ENCODE measurements at regions of chr2 and their contacts with region 1.

Region 1: DNA sequence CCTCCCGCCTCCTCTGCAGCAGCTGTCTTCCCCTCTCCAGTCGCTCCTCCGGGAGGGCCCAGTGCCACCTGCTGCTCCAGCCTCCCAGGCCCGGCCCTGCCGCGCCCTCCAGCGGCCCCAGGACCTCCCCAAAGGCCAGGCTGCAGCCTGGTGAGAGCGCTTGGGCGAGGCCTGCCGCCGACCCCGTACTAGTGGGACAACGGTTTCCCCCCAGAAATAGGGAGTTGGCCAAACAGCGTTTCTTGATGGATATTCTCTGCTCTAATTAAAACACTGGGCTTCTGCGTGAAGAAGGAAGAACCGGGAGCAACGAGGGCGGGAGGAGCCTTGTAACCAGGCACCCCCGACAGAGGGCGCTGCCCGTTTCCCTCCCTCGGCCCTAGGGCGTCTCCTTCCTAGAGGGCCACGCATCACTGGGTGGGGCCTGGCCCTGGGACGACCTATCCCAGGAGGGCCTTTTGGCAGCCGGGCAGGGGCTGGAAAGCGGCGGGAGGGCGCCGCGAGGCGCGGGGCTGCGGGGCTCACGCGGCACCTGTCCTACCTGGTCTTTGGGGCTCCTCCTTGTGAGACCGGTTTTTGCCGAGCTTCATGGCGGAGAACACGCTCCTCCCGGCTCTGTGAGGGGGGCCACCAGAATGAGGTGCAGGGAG is 25.4 kb upstream of the OTOF start:
- DNase-seq: peak; percentile 50 to 96 (median 72)

Region 2: DNA sequence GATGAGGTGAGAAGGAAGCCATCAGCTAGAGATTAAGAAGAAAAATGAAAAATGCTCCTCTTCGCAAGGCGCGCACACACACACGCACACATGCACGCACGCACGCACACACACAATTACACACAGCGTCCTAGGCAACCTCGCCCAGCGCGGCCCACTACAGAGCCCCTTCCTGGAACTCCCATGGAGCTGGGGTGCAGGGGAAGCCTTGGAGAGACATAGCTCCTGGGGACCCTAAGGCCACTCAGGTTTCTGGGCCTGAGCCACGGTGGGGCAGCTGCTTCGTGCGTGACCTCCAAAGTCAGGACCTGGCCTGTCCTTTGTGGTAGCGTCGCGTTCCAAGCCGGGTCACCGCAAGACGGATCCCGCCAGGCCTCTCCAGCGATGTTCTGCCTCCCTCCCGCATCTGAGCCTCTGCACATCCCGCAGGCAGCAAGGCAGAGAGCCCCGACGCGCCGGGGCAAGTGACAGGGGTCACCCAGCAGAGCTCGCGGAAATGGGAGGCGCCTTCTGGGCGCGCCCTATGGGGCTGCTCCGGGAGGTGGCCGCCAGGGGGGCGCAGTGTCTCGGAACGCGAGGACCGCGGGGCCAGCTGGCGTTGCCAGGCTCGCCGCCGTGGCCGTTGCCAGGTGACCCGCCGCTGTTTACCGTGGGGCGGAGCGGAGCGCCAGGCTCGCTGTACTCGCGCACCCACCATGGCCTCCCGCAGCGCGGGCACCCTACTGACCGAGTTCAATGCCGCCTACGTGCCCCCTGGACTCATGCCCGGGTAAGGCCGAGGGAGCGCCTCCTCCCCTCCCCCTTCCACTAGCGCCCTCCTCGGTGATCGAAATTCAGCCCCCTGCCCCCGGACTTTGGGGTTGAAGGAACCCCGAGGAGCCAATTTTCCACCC is 58.8 kb after region 1 on chr2:
- intact Hi-C with region 1: loop called (anchors 5 kb)
- DNase-seq: peak in 6 of 10 donors; percentile 17 to 86 (median 48)

Region 3: GRCh38 chr2:26745609-26746327 is 242.4 kb after region 1 on chr2:
- intact Hi-C with region 1: loop called (anchors 10 kb)
- DNase-seq: peak; percentile 69 to 97 (median 92)

Measured in posterior cingulate gyrus (tissue), 11 donors.